OCI-LY7 (cell line): ENCODE measurements at regions of chr3 and their contacts with region 1.

Region 1: DNA sequence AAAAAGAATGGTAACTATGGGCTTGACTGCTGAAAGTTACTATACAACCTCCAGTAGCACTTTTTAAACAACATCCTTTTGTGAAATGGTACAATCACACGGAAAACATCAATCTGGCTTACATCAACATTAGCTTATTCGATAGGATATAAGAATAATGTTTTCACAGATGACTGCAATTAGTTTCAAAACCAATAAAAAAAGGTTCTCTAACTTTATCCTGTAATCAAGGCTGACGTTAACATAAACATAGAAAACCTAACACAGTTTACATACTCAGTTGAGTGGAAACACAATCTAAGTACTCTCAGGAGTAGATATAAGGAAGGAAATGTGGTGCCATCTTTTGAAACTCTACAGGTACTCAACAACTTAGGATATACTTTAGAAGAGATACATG is 102.2 kb downstream of the DLG1 start:
- DNase-seq: no peak
- H3K4me3 ChIP-seq: no peak overlapping the region
- H3K27ac ChIP-seq: no peak overlapping the region
- H3K4me1 ChIP-seq: no peaks in the 10 kb centered on the region
- CTCF ChIP-seq: no peak

Region 2: DNA sequence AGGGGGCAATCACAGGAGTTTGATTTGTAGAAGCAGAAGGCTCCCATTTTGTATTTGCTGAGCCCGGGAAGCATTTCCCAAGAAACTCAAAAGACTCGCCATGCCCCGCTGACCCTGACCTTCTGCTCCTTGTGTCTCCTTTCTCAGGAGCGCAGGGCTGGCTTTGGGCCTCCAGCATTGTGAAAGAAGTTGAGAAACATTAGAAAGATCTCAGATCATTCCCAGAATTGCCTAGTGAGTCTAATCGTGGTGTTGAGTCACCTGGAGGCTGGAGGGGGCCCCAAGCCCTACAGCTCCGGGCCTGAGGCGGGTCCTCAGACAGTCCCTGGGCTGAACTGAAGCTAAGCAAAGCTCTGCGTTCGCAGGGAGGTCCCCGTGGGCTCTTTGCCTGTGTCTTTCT is 216.6 kb before region 1 on chr3:
- CTCF ChIA-PET with region 1: no interaction called
- POLR2A ChIA-PET with region 1: no interaction called
- intact Hi-C with region 1: no loop called
- DNase-seq: no peak
- H3K4me3 ChIP-seq: no peak overlapping the region
- H3K27ac ChIP-seq: no peak overlapping the region
- H3K4me1 ChIP-seq: peaks cover 4% of the 10 kb centered on the region
- CTCF ChIP-seq: no peak

Region 3: DNA sequence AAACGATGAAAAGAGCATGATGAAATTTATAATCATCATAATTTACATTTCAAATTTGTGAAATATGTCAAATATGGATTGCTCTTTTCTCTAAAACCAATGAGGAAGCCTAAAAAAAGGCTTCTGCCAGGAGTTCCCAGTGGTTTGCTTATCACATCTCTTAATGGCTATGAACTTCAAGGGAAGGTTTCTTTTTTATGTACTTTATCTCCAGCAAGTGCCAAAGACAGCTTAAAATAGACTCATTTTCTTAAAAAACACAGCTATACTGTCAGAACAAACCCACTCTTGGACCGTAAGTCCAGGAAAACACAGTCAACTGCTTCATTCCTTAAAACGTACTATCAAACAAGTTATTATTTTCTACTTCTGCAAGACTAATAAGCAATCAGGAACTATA is 22.0 kb after region 1 on chr3:
- CTCF ChIA-PET with region 1: no interaction called
- POLR2A ChIA-PET with region 1: interaction called, 10 read pairs
- intact Hi-C with region 1: no loop called
- DNase-seq: no peak
- H3K4me3 ChIP-seq: no peak overlapping the region
- H3K27ac ChIP-seq: no peak overlapping the region
- H3K4me1 ChIP-seq: no peaks in the 10 kb centered on the region
- CTCF ChIP-seq: no peak